ENCODE measurements at regions of chr18 and their contacts with region 1.

Region 1: DNA sequence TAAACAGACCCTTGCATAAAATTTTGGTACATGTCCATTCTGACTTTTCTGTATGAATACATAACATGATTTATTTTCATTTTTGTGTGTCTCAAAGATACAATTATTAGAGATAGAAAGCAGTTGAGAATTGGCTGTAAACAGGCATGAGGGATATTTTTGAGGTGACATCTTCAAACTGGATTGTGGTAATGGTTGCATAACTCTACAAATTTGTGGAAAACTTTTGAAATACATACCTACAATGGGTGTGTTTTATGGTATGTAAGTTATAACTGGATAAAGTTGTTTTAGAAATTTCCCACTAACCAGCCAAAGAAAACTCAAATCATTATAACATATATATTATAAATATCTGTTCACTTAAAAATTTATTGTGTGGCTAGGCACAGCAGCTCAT is 39.6 kb downstream of the GREB1L start:
- DNase-seq: no peak
- ATAC-seq: no peak
- H3K4me3 ChIP-seq: no peak overlapping the region
- H3K27ac ChIP-seq: no peak overlapping the region
- H3K4me1 ChIP-seq: peaks cover 0 to 6% (median 0%) of the 10 kb centered on the region in 12 donors
- H3K27me3 ChIP-seq: no peaks in the 10 kb centered on the region
- CTCF ChIP-seq: no peak
- POLR2A ChIP-seq: no peak

Region 2: GRCh38 chr18:21295104-21295503 is 13.5 kb after region 1 on chr18:
- intact Hi-C with region 1: no loop called
- DNase-seq: no peak
- ATAC-seq: no peak
- H3K4me3 ChIP-seq: no peak overlapping the region
- H3K27ac ChIP-seq: no peak overlapping the region
- H3K4me1 ChIP-seq: no peaks in the 10 kb centered on the region
- H3K27me3 ChIP-seq: no peaks in the 10 kb centered on the region
- CTCF ChIP-seq: no peak
- POLR2A ChIP-seq: no peak

Region 3: DNA sequence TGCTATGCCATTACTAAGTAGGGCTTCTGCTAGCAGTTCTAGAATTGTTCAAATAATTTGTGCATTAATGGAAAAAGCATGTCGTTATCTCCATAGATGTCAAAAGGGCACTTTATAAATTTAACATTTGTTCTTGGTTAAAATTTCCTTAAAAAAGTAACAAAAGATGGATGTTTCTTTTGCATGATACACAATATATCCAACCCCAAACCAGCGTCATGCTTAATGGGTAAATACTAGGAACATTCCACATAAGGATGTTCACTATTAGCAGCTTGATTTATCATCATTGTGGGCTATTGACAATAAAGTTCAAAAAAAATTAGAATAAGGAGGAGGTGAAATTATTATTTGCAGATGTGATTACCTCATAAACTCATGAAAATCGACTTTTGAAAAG is 40.1 kb after region 1 on chr18:
- intact Hi-C with region 1: loop called in 2 of 10 experiments (anchors 5 to 10 kb)
- DNase-seq: no peak
- ATAC-seq: no peak
- H3K4me3 ChIP-seq: no peak overlapping the region
- H3K27ac ChIP-seq: no peak overlapping the region
- H3K4me1 ChIP-seq: no peaks in the 10 kb centered on the region
- H3K27me3 ChIP-seq: no peaks in the 10 kb centered on the region
- CTCF ChIP-seq: no peak
- POLR2A ChIP-seq: no peak